ENCODE measurements at regions of chr7 and their contacts with region 1.

Region 1: DNA sequence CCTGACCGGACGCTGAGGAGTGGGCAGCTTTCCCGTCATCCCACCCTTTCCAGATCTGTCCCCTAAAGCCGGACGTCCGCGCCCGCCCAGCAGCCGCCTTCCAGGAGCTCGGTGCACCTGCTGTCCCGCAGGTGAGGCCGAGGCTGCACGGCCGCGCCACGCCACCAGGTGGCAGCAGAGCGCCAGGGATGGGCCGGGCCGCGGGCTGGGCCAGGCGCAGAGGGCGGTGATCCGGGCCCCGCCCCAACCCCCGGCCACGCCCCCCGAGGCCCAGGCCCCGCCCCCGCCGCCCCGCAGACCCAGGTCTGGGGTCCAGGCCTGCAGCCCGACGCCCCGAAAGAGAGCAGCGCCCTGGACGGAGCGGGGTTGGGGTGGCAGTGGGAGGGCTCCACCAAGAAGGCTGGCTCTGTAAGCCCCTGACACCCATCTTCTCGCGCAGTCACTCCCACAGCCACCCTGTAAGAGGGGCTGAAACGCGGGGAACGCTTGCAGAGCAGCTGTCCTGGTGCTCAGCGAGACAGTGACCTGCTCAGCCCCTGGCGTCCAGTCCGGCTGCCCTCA is 32.2 kb downstream of the FOXL3 start:
- DNase-seq: peak; percentile 41
- H3K4me3 ChIP-seq: no peak overlapping the region
- H3K27ac ChIP-seq: no peak overlapping the region
- H3K4me1 ChIP-seq: no peaks in the 10 kb centered on the region
- H3K27me3 ChIP-seq: peaks cover 0 to 11% of the 10 kb centered on the region in 2 experiments
- CTCF ChIP-seq: peak; percentile 73 to 79
- POLR2A ChIP-seq: no peak

Region 2: GRCh38 chr7:774161-775109 is 452.2 kb after region 1 on chr7:
- CTCF ChIA-PET with region 1: interaction called, 9 read pairs
- POLR2A ChIA-PET with region 1: no interaction called
- dilution Hi-C with region 1: no loop called
- intact Hi-C with region 1: loop called (anchors 1 kb)
- DNase-seq: peak; percentile 34
- H3K4me3 ChIP-seq: no peak overlapping the region
- H3K27ac ChIP-seq: no peak overlapping the region
- H3K4me1 ChIP-seq: peaks cover 39% of the 10 kb centered on the region
- H3K27me3 ChIP-seq: no peaks in the 10 kb centered on the region
- CTCF ChIP-seq: peak; percentile 91 to 93
- POLR2A ChIP-seq: no peak

Measured in endothelial cell of umbilical vein (primary cell).